HepG2 (cell line): ENCODE measurements at regions of chr16 and their contacts with region 1.

Region 1: GRCh38 chr16:30997000-30997886 is 12.2 kb downstream of the HSD3B7 start:
- DNase-seq: peak; percentile 79
- ATAC-seq: peak; percentile 70
- H3K4me3 ChIP-seq: peak overlapping the region; percentile 84 to 89 (median 84)
- H3K27ac ChIP-seq: peak overlapping the region; percentile 93
- H3K4me1 ChIP-seq: peaks cover 87% of the 10 kb centered on the region
- H3K27me3 ChIP-seq: no peaks in the 10 kb centered on the region
- CTCF ChIP-seq: peak; percentile 43
- EP300 ChIP-seq: 0 out of 4 replicates have a peak, but pooled peaks of 1 of the 2 experiments have one; percentile 1
- POLR2A ChIP-seq: peak; percentile 83 to 87
- RAD21 ChIP-seq: 0 out of 2 replicates have a peak, but pooled peaks have one; percentile 48

Region 2: GRCh38 chr16:30728899-30729672 is 268.2 kb before region 1 on chr16:
- CTCF ChIA-PET with region 1: no interaction called
- POLR2A ChIA-PET with region 1: no interaction called
- in situ Hi-C with region 1: no loop called
- intact Hi-C with region 1: no loop called
- DNase-seq: no peak
- ATAC-seq: no peak; the same call in 2 of the 3 replicates
- H3K4me3 ChIP-seq: no peak overlapping the region
- H3K27ac ChIP-seq: no peak overlapping the region
- H3K4me1 ChIP-seq: no peaks in the 10 kb centered on the region
- H3K27me3 ChIP-seq: no peaks in the 10 kb centered on the region
- CTCF ChIP-seq: no peak
- EP300 ChIP-seq: no peak
- POLR2A ChIP-seq: no peak
- RAD21 ChIP-seq: no peak

Region 3: DNA sequence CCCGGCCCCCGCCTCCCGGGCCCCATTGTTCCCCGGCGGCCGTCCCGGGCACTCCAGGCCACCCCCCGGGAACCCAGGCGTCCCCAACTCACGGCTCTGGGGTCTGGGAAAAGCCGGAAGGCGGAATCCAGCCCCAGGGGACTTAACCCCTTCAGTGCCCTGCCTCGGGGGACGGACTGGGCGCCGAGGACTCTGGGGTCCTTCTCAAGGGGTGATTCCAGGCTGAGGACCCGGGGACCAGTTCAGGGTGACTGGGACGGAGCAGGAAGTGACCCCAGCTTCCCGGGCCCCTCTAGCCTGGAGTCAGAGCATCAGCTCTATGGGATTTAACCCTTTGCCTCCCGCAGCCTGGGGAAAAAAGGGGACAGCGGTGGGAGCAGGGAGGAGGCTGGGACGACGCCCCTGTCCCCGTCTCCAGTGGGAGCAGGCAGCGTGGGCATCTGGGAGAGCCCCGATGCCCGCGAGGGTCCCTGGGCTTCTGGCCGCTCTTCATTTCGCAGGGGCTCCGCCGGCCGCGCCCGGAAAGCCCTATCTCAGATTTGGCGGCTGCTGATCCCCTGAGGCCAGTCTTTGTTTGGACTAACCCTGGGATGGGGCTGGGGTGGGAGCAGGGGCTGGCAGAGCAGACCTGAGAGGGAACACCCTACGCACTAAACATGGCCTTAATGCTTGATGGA is 210.2 kb before region 1 on chr16 and contains the start of gene ZNF629:
- CTCF ChIA-PET with region 1: no interaction called
- POLR2A ChIA-PET with region 1: no interaction called
- in situ Hi-C with region 1: no loop called
- intact Hi-C with region 1: loop called (anchors 5 kb)
- DNase-seq: peak; percentile 79
- ATAC-seq: peak; percentile 83
- H3K4me3 ChIP-seq: peak within 1 kb of the TSS; percentile 99 to 100 (median 100)
- H3K27ac ChIP-seq: peak within 1 kb of the TSS; percentile 78
- H3K4me1 ChIP-seq: peaks cover 30% of the 10 kb centered on the region
- H3K27me3 ChIP-seq: peaks cover 3 to 5% of the 10 kb centered on the region in 2 experiments; a peak in 2 of 5 replicates
- CTCF ChIP-seq: peak; percentile 43
- EP300 ChIP-seq: peak in 1 of 2 experiments; percentile 46; a peak in 2 of 4 replicates
- POLR2A ChIP-seq: peak; percentile 47 to 52
- RAD21 ChIP-seq: peak; percentile 62
- total RNA-seq, gene ZNF629: 14.3 and 16.5 TPM in 2 replicates

Region 4: DNA sequence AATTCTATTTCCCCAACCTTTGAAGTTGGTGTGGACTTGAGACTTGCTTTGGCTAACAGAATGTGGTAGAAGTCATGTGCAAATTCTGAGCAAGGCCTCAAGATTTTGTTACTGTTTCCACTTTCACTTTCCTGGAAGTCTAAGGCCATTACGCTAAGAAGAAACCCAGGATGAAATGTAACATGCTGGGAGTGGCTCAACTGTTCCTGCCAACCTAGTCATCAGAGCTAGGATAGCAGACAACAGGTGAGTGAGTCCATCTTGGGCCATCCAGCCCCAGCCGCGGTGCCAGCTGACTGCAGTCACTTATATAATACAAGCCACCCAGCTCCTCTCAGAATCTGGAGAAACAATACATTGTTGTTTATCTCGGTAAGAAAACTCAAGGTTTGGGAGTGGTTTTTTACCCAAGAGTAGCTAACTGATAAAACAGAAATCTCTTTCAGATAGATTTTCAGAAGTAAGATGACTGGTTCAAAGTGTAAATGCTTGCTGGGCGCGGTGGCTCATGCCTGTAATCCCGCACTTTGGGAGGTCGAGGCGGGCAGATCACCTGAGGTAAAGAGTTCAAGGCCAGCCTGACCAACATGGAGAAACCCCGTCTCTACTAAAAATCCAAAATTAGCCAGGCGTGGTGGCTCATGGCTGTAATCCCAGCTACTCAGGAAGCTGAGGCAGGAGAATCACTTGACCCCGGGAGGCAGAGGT is 25.5 kb after region 1 on chr16:
- CTCF ChIA-PET with region 1: no interaction called
- POLR2A ChIA-PET with region 1: interaction called, 41 read pairs
- in situ Hi-C with region 1: no loop called
- intact Hi-C with region 1: loop called (anchors 2 kb)
- DNase-seq: peak; percentile 30
- ATAC-seq: peak; percentile 21; the same call in 2 of the 3 replicates
- H3K4me3 ChIP-seq: peak overlapping the region in 2 of 3 experiments; percentile 19 to 43; a peak in 3 of 6 replicates
- H3K27ac ChIP-seq: peak overlapping the region; percentile 19
- H3K4me1 ChIP-seq: peaks cover 51% of the 10 kb centered on the region
- H3K27me3 ChIP-seq: peaks cover 0 to 2% of the 10 kb centered on the region in 2 experiments; a peak in 1 of 5 replicates
- CTCF ChIP-seq: no peak
- EP300 ChIP-seq: no peak
- POLR2A ChIP-seq: no peak
- RAD21 ChIP-seq: no peak

Region 5: DNA sequence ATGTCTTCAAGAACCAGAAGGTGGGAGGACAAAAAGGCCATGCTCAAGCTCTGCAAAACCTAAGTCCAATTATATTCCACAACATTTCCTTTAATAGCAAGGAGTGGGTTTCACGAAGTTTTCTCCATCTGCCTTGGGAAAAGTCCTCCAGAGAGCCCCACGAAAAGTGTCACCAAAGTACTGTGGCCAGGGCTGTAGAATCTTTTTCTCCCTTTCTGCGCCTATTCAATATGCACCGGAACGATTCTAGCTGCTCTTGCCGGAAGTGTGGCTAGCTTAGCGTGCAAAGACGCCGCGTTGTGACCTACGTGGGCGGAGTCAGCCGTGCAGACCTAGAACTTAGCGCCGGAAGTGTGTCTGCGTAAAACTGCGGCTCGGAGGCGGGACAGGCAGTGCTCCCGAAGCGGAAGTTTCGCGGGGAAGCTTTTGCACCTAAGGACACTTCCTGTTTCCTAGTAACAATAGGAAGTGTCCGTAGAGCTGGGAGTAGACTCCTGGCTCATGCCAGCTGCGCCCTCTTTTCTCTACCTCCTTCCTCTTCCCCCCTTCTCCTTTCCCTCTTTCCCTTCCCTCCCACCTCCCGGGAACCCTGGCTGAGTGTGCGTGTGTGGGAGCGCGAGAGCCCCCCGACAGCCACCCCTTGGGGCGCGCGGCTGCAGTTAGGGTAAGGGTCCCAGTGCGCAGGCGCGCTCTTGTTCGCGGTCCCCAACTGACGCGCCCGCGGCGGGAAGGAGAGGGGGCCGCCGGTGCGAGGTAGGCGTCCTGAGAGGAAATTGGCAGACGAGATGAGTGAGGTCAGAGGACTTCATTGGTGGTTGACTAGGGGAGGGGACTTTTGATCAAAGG is 76.9 kb after region 1 on chr16 and contains the starts of genes ZNF646 and ZNF668:
- CTCF ChIA-PET with region 1: no interaction called
- POLR2A ChIA-PET with region 1: interaction called, 24 read pairs
- in situ Hi-C with region 1: no loop called
- intact Hi-C with region 1: loop called (anchors 1 kb)
- DNase-seq: peak; percentile 99
- ATAC-seq: peak; percentile 86
- H3K4me3 ChIP-seq: peak within 1 kb of the TSS; percentile 75 to 97 (median 90)
- H3K27ac ChIP-seq: peak within 1 kb of the TSS; percentile 83
- H3K4me1 ChIP-seq: peaks cover 22% of the 10 kb centered on the region
- H3K27me3 ChIP-seq: no peaks in the 10 kb centered on the region; a peak in 1 of 5 replicates
- CTCF ChIP-seq: no peak; the same call in 1 of the 2 replicates
- EP300 ChIP-seq: peak in 1 of 2 experiments; percentile 34; a peak in 1 of 4 replicates
- POLR2A ChIP-seq: peak; percentile 84 to 90
- RAD21 ChIP-seq: peak; percentile 71
- total RNA-seq, gene ZNF646: 7.8 and 10.9 TPM in 2 replicates
- total RNA-seq, gene ZNF668: 7.5 and 9.8 TPM in 2 replicates

Region 6: GRCh38 chr16:31142109-31143010 is 145.1 kb after region 1 on chr16:
- CTCF ChIA-PET with region 1: no interaction called
- POLR2A ChIA-PET with region 1: interaction called, 20 read pairs
- in situ Hi-C with region 1: no loop called
- intact Hi-C with region 1: loop called (anchors 5 kb)
- DNase-seq: peak; percentile 98
- ATAC-seq: peak; percentile 74
- H3K4me3 ChIP-seq: peak overlapping the region; percentile 39 to 77 (median 64)
- H3K27ac ChIP-seq: peak overlapping the region; percentile 80
- H3K4me1 ChIP-seq: peaks cover 65% of the 10 kb centered on the region
- H3K27me3 ChIP-seq: peaks cover 0 to 14% of the 10 kb centered on the region in 2 experiments; a peak in 3 of 5 replicates
- CTCF ChIP-seq: peak; percentile 98
- EP300 ChIP-seq: peak; percentile 26 to 27; a peak in 1 of 4 replicates
- POLR2A ChIP-seq: no peak
- RAD21 ChIP-seq: peak; percentile 99

Region 7: DNA sequence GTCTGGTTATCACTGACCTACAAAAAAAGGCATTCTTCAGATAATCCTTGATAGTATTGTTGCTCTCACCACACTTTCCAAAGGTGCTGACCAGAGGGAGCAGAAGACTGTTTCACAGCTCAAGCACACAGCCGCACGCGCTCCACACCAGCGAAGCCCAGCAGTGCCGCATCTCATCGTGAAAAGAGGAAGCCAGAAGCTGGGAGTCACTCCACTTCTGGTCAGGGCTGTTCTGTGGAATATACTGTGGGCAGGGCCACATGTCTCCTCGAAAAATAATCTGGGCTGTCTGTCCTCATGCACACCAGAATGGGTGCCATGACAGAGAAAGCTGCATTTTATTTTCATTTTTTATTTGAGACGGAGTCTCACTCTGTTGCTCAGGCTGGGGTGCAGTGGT is 159.9 kb after region 1 on chr16:
- CTCF ChIA-PET with region 1: no interaction called
- POLR2A ChIA-PET with region 1: no interaction called
- in situ Hi-C with region 1: no loop called
- intact Hi-C with region 1: no loop called
- DNase-seq: no peak
- ATAC-seq: peak; percentile 57
- H3K4me3 ChIP-seq: no peak overlapping the region
- H3K27ac ChIP-seq: no peak overlapping the region
- H3K4me1 ChIP-seq: peaks cover 8% of the 10 kb centered on the region
- H3K27me3 ChIP-seq: peaks cover 4 to 32% of the 10 kb centered on the region in 2 experiments; a peak in 4 of 5 replicates
- CTCF ChIP-seq: no peak
- EP300 ChIP-seq: no peak
- POLR2A ChIP-seq: no peak
- RAD21 ChIP-seq: no peak

Region 8: GRCh38 chr16:31229501-31229900 is 232.3 kb after region 1 on chr16:
- CTCF ChIA-PET with region 1: no interaction called
- POLR2A ChIA-PET with region 1: no interaction called
- in situ Hi-C with region 1: no loop called
- intact Hi-C with region 1: no loop called
- DNase-seq: no peak
- ATAC-seq: no peak
- H3K4me3 ChIP-seq: no peak overlapping the region
- H3K27ac ChIP-seq: no peak overlapping the region
- H3K4me1 ChIP-seq: no peaks in the 10 kb centered on the region
- H3K27me3 ChIP-seq: peaks cover 5 to 26% of the 10 kb centered on the region in 2 experiments; a peak in 4 of 5 replicates
- CTCF ChIP-seq: no peak
- EP300 ChIP-seq: no peak
- POLR2A ChIP-seq: no peak
- RAD21 ChIP-seq: no peak

Region 9: GRCh38 chr16:31873556-31874365 is 876.5 kb after region 1 on chr16 and contains the start of gene ZNF267:
- CTCF ChIA-PET with region 1: no interaction called
- POLR2A ChIA-PET with region 1: no interaction called
- in situ Hi-C with region 1: loop called (anchors 10 kb)
- intact Hi-C with region 1: no loop called
- DNase-seq: peak; percentile 94
- ATAC-seq: peak; percentile 90
- H3K4me3 ChIP-seq: peak within 1 kb of the TSS; percentile 89 to 99 (median 95)
- H3K27ac ChIP-seq: peak within 1 kb of the TSS; percentile 89
- H3K4me1 ChIP-seq: peaks cover 59% of the 10 kb centered on the region
- H3K27me3 ChIP-seq: peaks cover 0 to 13% of the 10 kb centered on the region in 2 experiments; a peak in 2 of 5 replicates
- CTCF ChIP-seq: no peak
- EP300 ChIP-seq: 0 out of 4 replicates have a peak, but pooled peaks of 1 of the 2 experiments have one; percentile 9
- POLR2A ChIP-seq: peak; percentile 86 to 92
- RAD21 ChIP-seq: peak; percentile 12; the same call in 1 of the 2 replicates
- total RNA-seq, gene ZNF267: 30.0 and 42.4 TPM in 2 replicates